ENCODE measurements at regions of chr10 and their contacts with region 1.

Region 1: DNA sequence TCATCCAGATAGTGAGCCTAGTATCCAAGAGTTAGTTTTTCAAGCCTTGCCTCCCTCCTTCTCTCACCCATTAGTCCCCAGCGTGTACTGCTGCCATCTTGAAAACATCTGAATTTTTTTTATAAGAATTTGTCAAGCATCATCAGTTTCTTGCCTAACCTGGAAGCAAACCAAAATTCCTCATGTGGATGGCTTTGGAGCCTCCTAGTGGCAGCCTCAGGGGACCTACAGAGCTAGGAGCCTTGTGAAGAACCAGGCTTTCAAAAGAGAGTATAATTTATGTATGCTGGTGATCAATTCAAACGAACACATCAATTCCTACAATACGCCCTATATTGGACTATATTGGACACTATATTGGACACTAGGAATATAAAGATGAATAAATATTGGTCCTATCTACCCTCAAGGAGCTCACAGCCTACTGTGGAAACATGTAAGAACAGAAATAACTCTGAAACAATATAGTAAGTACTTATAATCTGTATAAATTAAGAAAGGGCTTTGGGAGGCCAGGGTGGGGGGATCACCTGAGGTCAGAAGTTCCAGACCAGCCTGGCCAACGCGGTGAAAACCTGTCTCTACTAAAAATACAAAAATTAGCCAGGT is 63.4 kb downstream of the HPSE2 start:
- DNase-seq: peak; percentile 65
- H3K4me3 Mint-ChIP-seq: no peak overlapping the region
- H3K27ac Mint-ChIP-seq: no peak overlapping the region
- H3K4me1 Mint-ChIP-seq: no peaks in the 10 kb centered on the region
- H3K27me3 Mint-ChIP-seq: peaks cover 46% of the 10 kb centered on the region
- CTCF ChIP-seq: peak; percentile 54

Region 2: DNA sequence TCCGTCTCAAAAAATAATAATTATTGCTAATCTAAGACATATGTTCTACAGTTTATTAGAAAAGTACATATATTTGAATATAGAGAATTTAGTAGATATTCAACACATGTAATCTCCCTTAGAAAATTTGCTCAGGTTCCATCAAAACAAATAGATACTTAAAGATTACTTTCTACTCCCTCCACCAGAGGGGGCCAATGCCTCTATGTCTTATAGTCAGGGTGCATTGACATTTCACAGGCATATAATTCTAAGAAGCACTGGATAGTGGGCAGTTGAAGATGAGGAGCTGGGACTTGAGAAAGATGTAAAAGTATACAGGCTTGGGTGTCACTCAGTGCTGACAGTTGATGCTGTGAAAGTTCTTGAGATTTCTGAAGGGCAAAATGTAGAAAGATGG is 423.9 kb before region 1 on chr10:
- CTCF ChIA-PET with region 1: no interaction called
- POLR2A ChIA-PET with region 1: no interaction called
- intact Hi-C with region 1: loop called (anchors 5 kb)
- DNase-seq: peak; percentile 62
- H3K4me3 Mint-ChIP-seq: no peak overlapping the region
- H3K27ac Mint-ChIP-seq: no peak overlapping the region
- H3K4me1 Mint-ChIP-seq: no peaks in the 10 kb centered on the region
- H3K27me3 Mint-ChIP-seq: no peaks in the 10 kb centered on the region
- CTCF ChIP-seq: peak; percentile 13

Measured in MCF 10A (cell line).